ENCODE measurements at regions of chr11 and their contacts with region 1.

Region 1: DNA sequence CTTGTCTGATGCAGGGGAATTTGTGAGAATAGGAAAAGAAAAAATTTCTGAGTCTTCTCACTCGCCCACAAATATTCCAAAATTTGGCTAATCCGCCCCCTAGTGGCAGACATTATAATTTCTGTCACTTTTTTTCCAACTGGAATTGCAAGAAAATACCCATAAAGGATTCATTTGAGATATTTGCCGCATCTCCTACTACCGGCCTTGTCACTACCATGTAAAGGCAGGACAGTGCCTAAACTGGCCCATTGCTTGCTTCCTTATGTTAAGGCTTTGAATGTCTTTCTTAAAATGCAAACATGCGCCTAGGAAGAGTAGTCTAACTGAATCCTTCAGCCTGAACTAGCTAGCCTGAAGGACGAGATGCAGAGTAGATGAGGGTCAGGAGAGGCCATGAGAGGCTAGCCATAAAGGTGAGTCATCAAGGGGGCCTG is 9.3 kb upstream of the CEP295 start:
- DNase-seq: peak in 2 of 5 donors; percentile 7 to 21
- ATAC-seq: no peak
- H3K4me3 ChIP-seq: no peak overlapping the region
- H3K27ac ChIP-seq: no peak overlapping the region
- H3K4me1 ChIP-seq: peaks cover 0 to 6% (median 0%) of the 10 kb centered on the region in 12 donors
- H3K27me3 ChIP-seq: peaks cover 0 to 15% (median 0%) of the 10 kb centered on the region in 9 donors
- CTCF ChIP-seq: peak; percentile 59 to 97 (median 78)
- POLR2A ChIP-seq: no peak

Region 2: GRCh38 chr11:92941676-92942571 is 710.3 kb before region 1 on chr11:
- intact Hi-C with region 1: loop called in 1 of 10 experiments (anchors 10 kb)
- DNase-seq: no peak
- ATAC-seq: no peak
- H3K4me3 ChIP-seq: no peak overlapping the region
- H3K27ac ChIP-seq: no peak overlapping the region
- H3K4me1 ChIP-seq: no peaks in the 10 kb centered on the region
- H3K27me3 ChIP-seq: peaks cover 0 to 14% (median 0%) of the 10 kb centered on the region in 9 donors
- CTCF ChIP-seq: peak; percentile 30 to 64 (median 50)
- POLR2A ChIP-seq: no peak

Region 3: DNA sequence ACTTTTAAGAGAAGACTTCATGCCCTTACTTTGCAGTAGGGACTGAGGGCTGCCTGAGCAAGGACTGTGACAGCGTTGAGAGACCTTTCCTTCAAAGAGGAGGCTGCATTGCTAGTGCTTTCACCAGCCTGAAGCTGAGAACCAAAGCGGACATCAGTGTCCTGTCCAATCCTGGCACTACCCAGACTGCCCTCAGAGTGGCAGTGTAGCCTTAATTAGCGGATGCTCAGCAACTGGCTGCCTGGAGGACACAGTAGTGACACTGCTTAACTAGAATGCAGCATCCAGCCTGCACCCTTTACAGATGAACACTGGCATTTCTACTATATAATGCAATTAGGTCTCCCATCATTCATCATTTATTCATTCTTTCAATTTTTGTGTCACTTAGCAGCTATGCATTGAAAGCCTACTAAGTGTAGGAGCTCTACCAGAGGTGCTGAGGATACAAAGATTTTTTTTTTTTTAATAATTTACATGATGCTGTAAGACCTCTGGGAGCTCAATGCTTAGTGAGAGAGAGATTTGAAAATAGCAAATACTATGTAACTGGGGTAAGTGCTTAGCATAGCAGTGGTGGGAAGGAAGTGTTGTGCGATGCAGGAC is 417.5 kb before region 1 on chr11:
- intact Hi-C with region 1: loop called (anchors 1 to 2 kb)
- DNase-seq: peak; percentile 61 to 77 (median 74)
- ATAC-seq: peak; percentile 97 to 99 (median 97)
- H3K4me3 ChIP-seq: no peak overlapping the region
- H3K27ac ChIP-seq: no peak overlapping the region
- H3K4me1 ChIP-seq: peaks cover 0 to 2% (median 0%) of the 10 kb centered on the region in 12 donors
- H3K27me3 ChIP-seq: peaks cover 0 to 3% (median 0%) of the 10 kb centered on the region in 9 donors
- CTCF ChIP-seq: peak; percentile 85 to 95 (median 88)
- POLR2A ChIP-seq: no peak

Region 4: GRCh38 chr11:93476796-93477195 is 175.4 kb before region 1 on chr11:
- intact Hi-C with region 1: loop called in 2 of 10 experiments (anchors 5 to 10 kb)
- DNase-seq: no peak
- ATAC-seq: no peak
- H3K4me3 ChIP-seq: no peak overlapping the region
- H3K27ac ChIP-seq: no peak overlapping the region
- H3K4me1 ChIP-seq: peaks cover 0 to 4% (median 0%) of the 10 kb centered on the region in 12 donors
- H3K27me3 ChIP-seq: no peaks in the 10 kb centered on the region
- CTCF ChIP-seq: no peak
- POLR2A ChIP-seq: no peak

Region 5: DNA sequence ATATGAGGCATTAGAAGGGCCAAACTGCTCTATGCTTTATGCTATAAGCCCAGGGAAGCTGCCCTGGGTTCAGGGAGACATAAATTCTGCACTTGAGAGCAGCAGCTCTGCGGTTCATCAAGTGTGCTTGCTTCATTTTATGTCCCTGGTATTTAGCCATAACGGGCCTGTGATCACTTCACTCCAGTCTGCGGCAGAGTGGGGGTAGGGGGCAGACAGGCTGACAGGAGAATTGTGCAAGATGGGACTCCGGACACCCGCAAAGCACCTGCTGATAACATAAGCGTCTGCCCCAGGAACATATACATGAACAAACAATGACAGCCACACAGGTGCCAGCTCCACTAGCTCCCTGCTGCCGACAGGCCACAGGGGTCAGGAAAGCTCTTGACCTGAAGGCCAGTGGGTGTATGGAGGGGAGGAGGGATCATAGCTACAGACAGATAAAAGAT is 165.1 kb before region 1 on chr11:
- intact Hi-C with region 1: loop called in 2 of 10 experiments (anchors 5 to 10 kb)
- DNase-seq: no peak
- ATAC-seq: peak in 3 of 4 donors; percentile 19 to 57 (median 52)
- H3K4me3 ChIP-seq: no peak overlapping the region
- H3K27ac ChIP-seq: no peak overlapping the region
- H3K4me1 ChIP-seq: peaks cover 0 to 22% (median 0%) of the 10 kb centered on the region in 12 donors
- H3K27me3 ChIP-seq: no peaks in the 10 kb centered on the region
- CTCF ChIP-seq: no peak
- POLR2A ChIP-seq: no peak

Region 6: DNA sequence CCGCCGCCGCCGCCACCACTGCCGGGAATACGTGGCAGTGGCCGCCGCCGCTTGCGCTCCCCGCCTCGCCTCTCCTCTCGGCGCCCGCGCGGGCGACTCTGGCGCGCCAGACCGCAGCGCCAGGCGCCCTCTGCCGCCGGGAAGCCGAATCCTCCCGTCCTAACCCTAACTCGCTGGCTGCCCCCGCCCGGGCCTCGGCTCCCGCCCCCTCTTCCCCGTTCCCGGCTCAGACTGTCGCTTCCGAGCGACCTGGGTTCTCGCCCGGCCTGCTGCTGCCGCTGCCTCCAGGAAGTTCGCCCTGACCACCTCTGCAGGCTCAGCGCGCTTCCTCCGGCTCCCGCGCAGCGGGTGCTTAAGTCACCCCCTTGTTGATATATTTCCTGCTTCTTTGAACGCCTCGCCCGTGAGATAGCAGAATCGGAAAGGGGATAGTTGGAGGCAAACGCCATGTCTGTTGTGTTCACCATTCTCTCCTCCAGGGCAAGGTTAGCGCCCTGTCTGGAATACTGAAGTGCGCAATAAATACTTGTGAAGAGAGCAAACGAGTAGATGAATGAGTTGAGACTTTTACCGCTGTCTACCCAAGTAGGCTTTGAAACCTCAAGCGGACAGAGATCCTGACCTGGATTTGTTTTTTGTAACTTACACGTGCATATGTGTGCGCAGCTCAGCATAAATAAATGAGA is 108.7 kb before region 1 on chr11 and contains the start of gene SMCO4:
- intact Hi-C with region 1: loop called (anchors 2 to 10 kb)
- DNase-seq: peak; percentile 87 to 93 (median 89)
- ATAC-seq: peak; percentile 77 to 92 (median 92)
- H3K4me3 ChIP-seq: peak within 1 kb of the TSS; percentile 71 to 99 (median 84)
- H3K27ac ChIP-seq: peak within 1 kb of the TSS; percentile 69 to 96 (median 88)
- H3K4me1 ChIP-seq: peaks cover 0 to 45% (median 28%) of the 10 kb centered on the region in 12 donors
- H3K27me3 ChIP-seq: no peaks in the 10 kb centered on the region
- CTCF ChIP-seq: peak; percentile 66 to 94 (median 80)
- POLR2A ChIP-seq: no peak
- total RNA-seq, gene SMCO4: 28.5 to 71.7 (median 52.5) TPM

Region 7: DNA sequence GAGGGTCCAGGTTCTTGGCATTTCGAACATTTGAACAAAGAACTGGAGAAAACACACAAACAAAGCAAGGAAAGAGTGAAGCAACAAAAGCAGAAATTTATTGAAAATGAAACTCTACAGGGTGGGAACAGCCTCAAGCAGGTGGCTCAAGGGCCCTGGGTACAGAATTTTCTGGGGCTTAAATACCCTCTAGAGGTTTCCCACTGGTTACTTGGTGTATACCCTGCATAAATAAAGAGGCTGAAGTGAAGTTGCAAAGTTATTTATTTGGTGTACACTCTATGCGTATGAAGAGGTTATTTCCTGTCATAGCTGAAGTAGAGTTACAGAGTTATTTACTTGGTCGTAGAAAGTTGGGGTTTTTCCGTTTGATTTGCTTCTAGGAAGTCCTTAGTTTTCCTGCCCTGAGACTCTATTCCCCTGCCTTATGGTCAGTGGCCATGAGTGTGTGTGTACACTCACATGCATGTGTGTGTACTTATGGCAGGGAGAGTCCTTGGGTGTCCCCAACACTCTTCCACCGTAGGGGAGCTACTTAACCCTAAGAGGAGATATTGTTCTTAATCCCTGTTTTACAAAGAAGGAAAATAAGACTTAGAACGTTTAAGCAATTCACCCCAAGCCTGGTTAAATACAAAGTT is 103.4 kb before region 1 on chr11:
- intact Hi-C with region 1: loop called (anchors 2 to 10 kb)
- DNase-seq: no peak
- ATAC-seq: no peak
- H3K4me3 ChIP-seq: no peak overlapping the region
- H3K27ac ChIP-seq: no peak overlapping the region
- H3K4me1 ChIP-seq: peaks cover 0 to 2% (median 0%) of the 10 kb centered on the region in 12 donors
- H3K27me3 ChIP-seq: peaks cover 0 to under 1% (median 0%) of the 10 kb centered on the region in 9 donors
- CTCF ChIP-seq: no peak
- POLR2A ChIP-seq: no peak

Region 8: GRCh38 chr11:93727985-93728791 is 76.0 kb after region 1 on chr11:
- intact Hi-C with region 1: no loop called
- DNase-seq: no peak
- ATAC-seq: peak in 1 of 4 donors; percentile 15
- H3K4me3 ChIP-seq: no peak overlapping the region
- H3K27ac ChIP-seq: no peak overlapping the region
- H3K4me1 ChIP-seq: peaks cover 0 to 6% (median 0%) of the 10 kb centered on the region in 12 donors
- H3K27me3 ChIP-seq: no peaks in the 10 kb centered on the region
- CTCF ChIP-seq: no peak
- POLR2A ChIP-seq: no peak

Region 9: DNA sequence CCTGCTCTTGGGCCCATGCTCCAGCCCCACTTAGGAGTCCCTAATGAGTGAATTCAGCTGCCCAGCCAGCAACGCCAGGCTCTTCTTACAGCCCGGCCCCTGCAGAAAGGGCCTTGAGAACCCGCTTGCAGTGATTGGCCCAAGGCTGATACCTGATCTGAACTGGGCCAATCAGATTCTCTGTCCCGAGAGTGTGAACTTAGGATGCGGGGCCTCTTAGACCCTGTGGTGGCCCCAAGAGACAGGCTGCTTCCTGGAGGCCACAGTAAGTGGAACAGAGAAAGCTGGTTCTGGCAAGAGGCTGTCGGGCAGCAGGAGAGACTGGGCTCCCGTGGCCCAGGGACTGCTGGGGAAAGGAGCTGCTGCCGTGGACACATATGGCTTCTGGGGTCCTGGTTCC is 186.8 kb after region 1 on chr11:
- intact Hi-C with region 1: no loop called
- DNase-seq: no peak
- ATAC-seq: no peak
- H3K4me3 ChIP-seq: no peak overlapping the region
- H3K27ac ChIP-seq: no peak overlapping the region
- H3K4me1 ChIP-seq: no peaks in the 10 kb centered on the region
- H3K27me3 ChIP-seq: no peaks in the 10 kb centered on the region
- CTCF ChIP-seq: no peak
- POLR2A ChIP-seq: no peak

Region 10: DNA sequence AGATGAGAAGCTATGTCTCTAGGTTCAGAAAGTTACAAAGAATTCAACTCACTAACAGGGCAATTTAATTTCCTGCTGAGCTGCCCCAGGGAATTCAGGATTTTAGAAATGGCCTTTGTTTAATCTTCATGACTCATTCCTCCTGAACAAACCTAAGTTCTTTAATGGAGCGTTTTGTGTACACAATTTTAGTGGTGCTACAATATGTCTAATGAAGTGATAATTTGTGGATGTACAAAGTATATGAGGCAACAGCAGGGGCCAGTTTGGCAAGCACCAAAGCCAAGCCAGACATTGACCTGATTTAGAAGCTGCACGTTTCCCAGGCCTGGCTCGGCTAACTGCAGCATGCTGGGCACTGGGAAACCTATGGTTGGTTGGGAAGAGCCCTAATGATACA is 334.5 kb after region 1 on chr11:
- intact Hi-C with region 1: no loop called
- DNase-seq: no peak
- ATAC-seq: no peak
- H3K4me3 ChIP-seq: no peak overlapping the region
- H3K27ac ChIP-seq: no peak overlapping the region
- H3K4me1 ChIP-seq: no peaks in the 10 kb centered on the region
- H3K27me3 ChIP-seq: no peaks in the 10 kb centered on the region
- CTCF ChIP-seq: no peak
- POLR2A ChIP-seq: no peak

Region 11: GRCh38 chr11:94271885-94272372 is 619.8 kb after region 1 on chr11:
- intact Hi-C with region 1: no loop called
- DNase-seq: no peak
- ATAC-seq: no peak
- H3K4me3 ChIP-seq: no peak overlapping the region
- H3K27ac ChIP-seq: no peak overlapping the region
- H3K4me1 ChIP-seq: no peaks in the 10 kb centered on the region
- H3K27me3 ChIP-seq: no peaks in the 10 kb centered on the region
- CTCF ChIP-seq: no peak
- POLR2A ChIP-seq: no peak

Measured in heart left ventricle (tissue), 16 donors.